WTC11 (cell line): ENCODE measurements at regions of chr5 and their contacts with region 1.

Region 1: GRCh38 chr5:167261309-167262100 is 1029.9 kb upstream of the WWC1 start:
- DNase-seq: no peak
- ATAC-seq: peak; percentile 75
- H3K4me3 Mint-ChIP-seq: no peak overlapping the region
- H3K27ac Mint-ChIP-seq: no peak overlapping the region
- H3K4me1 Mint-ChIP-seq: no peaks in the 10 kb centered on the region
- H3K27me3 Mint-ChIP-seq: no peaks in the 10 kb centered on the region
- CTCF ChIP-seq: peak; percentile 51; the same call in 1 of the 2 replicates

Region 2: GRCh38 chr5:167528651-167529050 is 267.1 kb after region 1 on chr5:
- CTCF ChIA-PET with region 1: interaction called, 10 read pairs
- POLR2A ChIA-PET with region 1: no interaction called
- DNase-seq: no peak
- ATAC-seq: peak; percentile 34; the same call in 1 of the 2 replicates
- H3K4me3 Mint-ChIP-seq: no peak overlapping the region
- H3K27ac Mint-ChIP-seq: no peak overlapping the region
- H3K4me1 Mint-ChIP-seq: peaks cover 19% of the 10 kb centered on the region
- H3K27me3 Mint-ChIP-seq: no peaks in the 10 kb centered on the region; the same call in 1 of the 2 replicates
- CTCF ChIP-seq: no peak

Region 3: GRCh38 chr5:167565032-167565954 is 303.8 kb after region 1 on chr5:
- CTCF ChIA-PET with region 1: interaction called, 10 read pairs
- POLR2A ChIA-PET with region 1: no interaction called
- DNase-seq: no peak
- ATAC-seq: peak; percentile 41
- H3K4me3 Mint-ChIP-seq: no peak overlapping the region
- H3K27ac Mint-ChIP-seq: no peak overlapping the region
- H3K4me1 Mint-ChIP-seq: peaks cover 32% of the 10 kb centered on the region
- H3K27me3 Mint-ChIP-seq: no peaks in the 10 kb centered on the region
- CTCF ChIP-seq: no peak